ENCODE measurements at regions of chr12 and their contacts with region 1.

Region 1: DNA sequence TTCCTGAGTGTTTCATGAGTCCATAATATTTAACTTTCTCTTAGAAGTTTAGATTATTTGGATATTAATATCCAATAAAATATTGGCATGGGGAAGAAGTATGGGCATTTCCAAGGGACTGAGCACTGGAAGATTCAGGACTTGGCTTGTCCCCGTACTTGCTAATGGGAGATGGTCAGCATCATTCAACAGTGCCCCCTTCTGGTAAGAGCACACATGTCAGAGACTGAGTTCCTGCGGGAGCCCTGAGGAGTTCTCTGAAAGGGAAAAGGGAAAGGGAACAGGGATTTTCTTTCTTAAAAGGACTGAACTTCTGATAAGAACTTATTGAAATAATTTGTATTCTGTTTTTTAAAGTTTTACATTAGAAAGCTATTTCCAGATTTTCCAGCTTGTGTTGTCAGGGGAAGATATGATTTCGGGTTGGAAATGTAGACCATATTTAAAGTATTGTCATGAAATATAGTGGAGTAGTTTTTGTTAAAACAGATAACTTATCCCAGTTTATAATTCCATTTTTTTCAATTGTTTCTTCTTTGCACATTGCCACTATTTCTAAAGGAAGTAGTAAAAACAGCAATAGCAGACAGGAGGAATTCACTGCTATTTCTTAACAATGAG is 59.8 kb upstream of the C12orf71 start:
- DNase-seq: peak; percentile 64
- H3K4me3 ChIP-seq: no peak overlapping the region
- H3K27ac ChIP-seq: no peak overlapping the region
- H3K4me1 ChIP-seq: no peaks in the 10 kb centered on the region
- H3K27me3 ChIP-seq: no peaks in the 10 kb centered on the region
- CTCF ChIP-seq: peak; percentile 85 to 87

Region 2: DNA sequence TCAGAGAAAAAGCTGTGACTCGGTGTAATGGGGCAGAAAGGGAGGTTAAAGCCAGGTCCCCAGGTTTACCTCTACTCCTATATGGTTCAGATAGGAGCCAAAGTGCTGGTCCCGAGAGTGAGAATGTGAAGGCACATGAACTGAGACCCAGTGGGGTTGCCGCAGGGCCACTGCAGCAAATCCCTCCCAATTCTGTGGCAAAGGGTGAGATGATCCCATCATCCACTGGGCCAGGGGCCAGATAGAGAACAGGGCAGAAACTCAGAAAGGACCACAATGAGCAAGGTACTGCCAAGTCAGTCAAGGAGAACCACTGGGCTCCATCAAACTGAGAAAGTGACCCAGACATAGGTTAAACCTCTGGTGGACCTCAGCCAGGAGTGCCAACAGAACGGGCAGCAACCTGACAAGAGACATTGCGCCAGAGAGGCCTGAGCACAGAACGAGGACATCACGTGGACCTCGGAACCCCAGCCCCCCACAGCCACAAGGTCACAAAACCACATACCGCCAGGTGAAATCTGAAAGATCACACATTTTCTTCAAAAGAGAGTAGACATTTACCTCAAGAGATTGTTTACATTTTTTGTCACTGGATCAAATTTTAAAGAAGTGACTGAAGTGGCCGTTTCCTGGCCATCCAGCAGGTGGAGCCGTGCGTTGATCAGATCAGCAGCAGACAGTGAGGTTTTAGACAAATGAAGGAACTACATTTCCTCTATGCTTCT is 288.7 kb before region 1 on chr12:
- CTCF ChIA-PET with region 1: no interaction called
- dilution Hi-C with region 1: no loop called
- in situ Hi-C with region 1: no loop called
- intact Hi-C with region 1: loop called (anchors 5 kb)
- DNase-seq: peak; percentile 39
- H3K4me3 ChIP-seq: no peak overlapping the region
- H3K27ac ChIP-seq: no peak overlapping the region
- H3K4me1 ChIP-seq: no peaks in the 10 kb centered on the region
- H3K27me3 ChIP-seq: no peaks in the 10 kb centered on the region
- CTCF ChIP-seq: peak; percentile 84 to 96

Region 3: DNA sequence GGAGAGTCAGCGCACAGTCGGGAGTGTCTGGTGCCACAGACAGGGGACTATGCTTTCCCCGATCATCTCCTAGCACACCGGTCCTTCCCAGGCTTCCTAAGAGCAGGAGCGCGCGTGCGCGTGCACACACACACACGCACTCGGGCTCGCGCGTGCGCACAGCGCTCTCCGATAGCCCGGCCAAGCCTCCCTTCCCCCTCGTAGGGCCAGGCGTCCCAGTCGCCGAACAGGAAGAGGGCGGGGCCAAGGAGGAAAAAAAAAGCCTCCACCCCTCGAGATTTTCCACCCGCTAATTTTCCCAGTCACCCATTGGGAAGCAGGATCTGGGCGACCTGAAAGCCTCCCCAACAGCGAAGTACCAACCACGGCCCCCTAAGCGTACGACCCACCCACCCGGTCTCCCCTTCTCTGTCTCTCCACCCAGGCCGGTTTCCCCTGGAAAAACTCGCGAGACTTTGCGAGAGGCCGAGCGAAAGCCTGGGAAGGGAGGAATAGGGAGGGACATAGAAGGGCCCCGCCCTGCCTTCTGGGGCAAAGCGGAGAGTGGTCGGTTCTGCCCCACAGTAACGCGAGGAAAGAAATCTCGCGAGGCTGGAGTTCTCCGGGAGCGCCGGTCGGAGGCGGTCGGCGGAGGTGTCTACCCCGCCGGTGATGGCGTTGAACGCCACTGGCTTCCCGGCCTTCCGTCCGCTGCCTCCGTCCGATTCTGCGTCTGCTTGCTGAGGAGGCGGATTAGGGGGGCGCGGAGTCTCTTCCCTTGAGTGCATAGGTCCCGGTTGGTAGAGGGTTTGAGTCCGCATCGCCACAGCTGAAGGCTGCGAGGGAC is 204.1 kb before region 1 on chr12 and contains the starts of genes FGFR1OP2 and INTS13:
- CTCF ChIA-PET with region 1: no interaction called
- dilution Hi-C with region 1: no loop called
- in situ Hi-C with region 1: no loop called
- intact Hi-C with region 1: loop called (anchors 10 kb)
- DNase-seq: peak; percentile 98
- H3K4me3 ChIP-seq: peak within 1 kb of the TSS; percentile 89 to 98 (median 91)
- H3K27ac ChIP-seq: peak within 1 kb of the TSS; percentile 85
- H3K4me1 ChIP-seq: peaks cover 12% of the 10 kb centered on the region
- H3K27me3 ChIP-seq: no peaks in the 10 kb centered on the region
- CTCF ChIP-seq: no peak
- total RNA-seq, gene FGFR1OP2: 25.7 to 33.3 TPM
- total RNA-seq, gene INTS13: 25.0 to 37.1 TPM

Region 4: GRCh38 chr12:27243804-27244683 is 101.8 kb after region 1 on chr12 and contains the start of gene STK38L:
- CTCF ChIA-PET with region 1: no interaction called
- dilution Hi-C with region 1: no loop called
- in situ Hi-C with region 1: no loop called
- intact Hi-C with region 1: loop called (anchors 1 kb)
- DNase-seq: peak; percentile 91
- H3K4me3 ChIP-seq: peak within 1 kb of the TSS; percentile 81 to 99 (median 86)
- H3K27ac ChIP-seq: peak within 1 kb of the TSS; percentile 90
- H3K4me1 ChIP-seq: peaks cover 20% of the 10 kb centered on the region
- H3K27me3 ChIP-seq: no peaks in the 10 kb centered on the region
- CTCF ChIP-seq: peak; percentile 7 to 52
- total RNA-seq, gene STK38L: 30.9 to 33.2 TPM

Region 5: DNA sequence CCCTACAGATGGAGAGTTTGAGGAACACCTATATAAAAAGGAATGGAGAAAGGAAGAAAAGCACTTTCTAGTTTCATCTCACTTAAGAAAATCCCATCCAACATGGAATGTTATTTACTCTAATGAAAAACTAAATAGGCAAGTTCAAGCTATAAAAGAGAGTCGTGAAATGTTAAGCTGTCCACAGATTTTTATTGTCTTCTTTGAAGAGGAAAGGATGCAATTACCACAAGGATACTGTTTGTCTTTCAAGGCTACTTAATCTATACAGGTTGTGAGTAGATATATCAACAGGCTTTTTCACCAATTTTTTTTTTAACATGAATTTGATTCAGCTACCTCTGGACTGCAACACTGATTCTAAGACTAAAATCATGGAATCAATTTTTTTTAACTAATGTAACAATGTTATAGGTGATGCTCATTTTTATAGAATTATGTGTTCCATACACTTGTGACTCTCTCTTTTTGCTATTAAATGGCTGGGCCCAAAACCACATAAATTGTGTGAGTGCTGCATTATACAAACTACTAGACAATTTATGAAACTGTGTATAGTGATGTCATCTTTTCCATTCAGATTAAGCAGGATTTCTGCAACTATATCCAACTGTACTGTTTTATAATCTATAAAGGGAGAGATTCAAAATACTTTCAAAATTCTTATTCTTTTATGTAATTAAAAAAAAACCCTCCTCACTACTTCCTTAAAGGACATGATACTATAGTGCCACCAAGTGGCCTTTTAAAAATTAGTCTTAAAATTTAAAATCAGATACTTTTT is 163.7 kb after region 1 on chr12:
- CTCF ChIA-PET with region 1: no interaction called
- dilution Hi-C with region 1: no loop called
- in situ Hi-C with region 1: no loop called
- intact Hi-C with region 1: loop called (anchors 2 kb)
- DNase-seq: no peak
- H3K4me3 ChIP-seq: no peak overlapping the region
- H3K27ac ChIP-seq: no peak overlapping the region
- H3K4me1 ChIP-seq: no peaks in the 10 kb centered on the region
- H3K27me3 ChIP-seq: no peaks in the 10 kb centered on the region
- CTCF ChIP-seq: peak; percentile 37 to 45

Region 6: GRCh38 chr12:27703710-27704452 is 561.7 kb after region 1 on chr12:
- CTCF ChIA-PET with region 1: no interaction called
- dilution Hi-C with region 1: no loop called
- in situ Hi-C with region 1: no loop called
- intact Hi-C with region 1: loop called (anchors 10 kb)
- DNase-seq: peak; percentile 66
- H3K4me3 ChIP-seq: no peak overlapping the region
- H3K27ac ChIP-seq: no peak overlapping the region
- H3K4me1 ChIP-seq: no peaks in the 10 kb centered on the region
- H3K27me3 ChIP-seq: no peaks in the 10 kb centered on the region
- CTCF ChIP-seq: peak; percentile 90 to 93